Cardiac septum (tissue), 1 donor: ENCODE measurements at regions of chr7 and their contacts with region 1.

Region 1: GRCh38 chr7:101244375-101245146 is at the start of gene FIS1:
- DNase-seq: peak; percentile 97
- total RNA-seq, gene FIS1: 284 TPM

Region 2: DNA sequence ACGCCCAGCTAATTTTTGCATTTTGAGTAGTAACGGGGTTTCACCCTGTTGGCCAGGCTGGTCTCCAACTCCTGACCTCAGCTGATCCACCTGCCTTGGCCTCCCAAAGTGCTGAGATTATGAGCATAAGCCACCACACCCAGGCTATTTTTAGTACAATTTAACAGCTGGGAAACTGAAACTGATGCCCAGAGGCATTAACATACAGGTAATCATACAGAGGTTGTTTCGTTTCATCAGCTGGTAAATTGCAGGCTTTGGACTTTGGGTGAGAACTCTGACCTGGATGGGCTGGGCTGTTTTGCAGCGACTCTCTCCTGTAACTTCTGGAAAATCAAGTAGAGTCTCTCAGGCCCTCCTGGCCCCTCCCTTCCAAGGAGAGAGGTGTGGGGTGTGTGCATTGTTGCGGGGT is 342.6 kb before region 1 on chr7:
- intact Hi-C with region 1: no loop called
- DNase-seq: no peak

Region 3: GRCh38 chr7:101287032-101287431 is 42.5 kb after region 1 on chr7:
- intact Hi-C with region 1: loop called (anchors 5 kb)
- DNase-seq: no peak

Region 4: DNA sequence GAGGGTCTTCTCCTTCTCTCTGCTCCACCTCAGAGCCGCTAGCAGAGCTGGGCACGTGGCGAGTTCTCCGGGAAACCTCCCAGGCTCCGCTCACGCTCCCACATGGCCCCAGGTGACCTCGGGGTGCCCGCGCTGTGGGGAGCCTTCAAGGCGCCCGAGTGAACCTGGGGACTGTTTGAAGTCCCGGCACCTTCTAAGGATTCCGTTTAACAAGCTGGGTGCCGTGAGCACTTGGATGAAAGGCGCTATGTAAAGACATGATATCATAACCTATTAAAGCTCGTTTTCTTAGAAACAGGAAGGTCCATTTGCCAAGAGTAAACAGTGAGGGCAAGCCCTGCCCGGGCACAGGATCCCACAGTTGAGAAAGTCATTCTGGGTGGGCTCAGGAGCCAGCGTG is 400.3 kb after region 1 on chr7:
- intact Hi-C with region 1: no loop called
- DNase-seq: no peak